ENCODE measurements at regions of chr6 and their contacts with region 1.

Region 1: DNA sequence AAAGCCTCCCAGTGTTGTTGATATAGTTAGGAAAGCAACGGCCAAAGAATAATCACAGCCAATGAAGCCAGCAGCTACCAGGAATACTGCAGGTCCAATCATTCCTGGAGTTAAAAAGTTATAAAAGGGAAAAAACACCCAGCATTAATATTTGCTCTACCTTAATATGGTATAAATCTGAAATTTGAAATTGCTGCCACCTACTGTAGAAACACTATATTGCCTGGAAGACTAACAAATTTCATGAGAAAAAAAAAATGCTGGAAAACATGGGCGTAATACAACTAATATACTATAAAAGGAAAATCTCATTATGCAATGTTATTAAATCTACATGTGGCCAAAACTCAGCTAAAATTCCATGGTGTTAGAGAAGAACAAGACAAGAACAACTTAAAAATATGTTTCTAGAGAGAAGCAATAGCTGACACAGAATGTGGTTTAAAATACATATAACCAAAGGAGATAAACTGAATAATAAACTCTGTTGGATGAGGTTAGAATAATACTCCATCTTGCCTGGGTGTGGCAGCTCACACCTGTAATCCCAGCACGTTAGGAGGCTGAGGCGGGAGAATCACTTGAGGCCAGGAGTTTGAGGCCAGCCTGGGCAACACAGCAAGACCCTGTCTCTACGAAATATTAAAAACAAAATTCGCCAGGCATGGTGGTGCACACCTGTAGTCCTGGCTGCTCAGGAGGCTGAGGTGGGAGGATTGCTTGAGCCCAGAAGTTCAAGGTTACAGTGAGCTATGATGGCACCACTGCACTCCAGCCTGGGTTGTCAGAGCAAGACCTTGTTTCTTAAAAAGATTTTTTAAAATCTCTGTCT is 43.1 kb downstream of the SLC17A5 start:
- DNase-seq: no peak
- ATAC-seq: peak; percentile 67
- H3K4me3 Mint-ChIP-seq: no peak overlapping the region
- H3K27ac Mint-ChIP-seq: no peak overlapping the region
- H3K4me1 Mint-ChIP-seq: peaks cover 5% of the 10 kb centered on the region
- H3K27me3 Mint-ChIP-seq: no peaks in the 10 kb centered on the region
- CTCF ChIP-seq: no peak

Region 2: DNA sequence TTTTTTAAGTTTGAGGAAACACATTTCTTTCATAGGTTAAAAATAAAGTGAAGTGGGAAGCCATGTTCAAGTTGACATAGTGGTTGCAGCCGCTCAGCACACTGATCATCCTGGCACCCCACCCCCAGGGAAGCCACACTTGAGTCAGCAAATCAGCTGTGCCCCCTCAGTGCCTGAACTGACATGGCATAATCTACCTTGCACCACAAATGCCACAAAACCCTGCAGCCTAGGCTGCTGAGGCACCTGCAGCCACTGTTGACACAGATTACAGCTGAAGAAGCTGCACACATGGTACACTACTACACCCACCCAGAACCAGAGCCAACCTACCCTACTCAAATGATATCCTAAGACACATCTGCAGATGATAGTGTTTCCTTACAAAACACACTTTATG is 1801.8 kb before region 1 on chr6:
- CTCF ChIA-PET with region 1: no interaction called
- POLR2A ChIA-PET with region 1: no interaction called
- intact Hi-C with region 1: no loop called
- DNase-seq: no peak
- ATAC-seq: no peak
- H3K4me3 Mint-ChIP-seq: no peak overlapping the region
- H3K27ac Mint-ChIP-seq: no peak overlapping the region
- H3K4me1 Mint-ChIP-seq: no peaks in the 10 kb centered on the region
- H3K27me3 Mint-ChIP-seq: no peaks in the 10 kb centered on the region
- CTCF ChIP-seq: no peak

Region 3: DNA sequence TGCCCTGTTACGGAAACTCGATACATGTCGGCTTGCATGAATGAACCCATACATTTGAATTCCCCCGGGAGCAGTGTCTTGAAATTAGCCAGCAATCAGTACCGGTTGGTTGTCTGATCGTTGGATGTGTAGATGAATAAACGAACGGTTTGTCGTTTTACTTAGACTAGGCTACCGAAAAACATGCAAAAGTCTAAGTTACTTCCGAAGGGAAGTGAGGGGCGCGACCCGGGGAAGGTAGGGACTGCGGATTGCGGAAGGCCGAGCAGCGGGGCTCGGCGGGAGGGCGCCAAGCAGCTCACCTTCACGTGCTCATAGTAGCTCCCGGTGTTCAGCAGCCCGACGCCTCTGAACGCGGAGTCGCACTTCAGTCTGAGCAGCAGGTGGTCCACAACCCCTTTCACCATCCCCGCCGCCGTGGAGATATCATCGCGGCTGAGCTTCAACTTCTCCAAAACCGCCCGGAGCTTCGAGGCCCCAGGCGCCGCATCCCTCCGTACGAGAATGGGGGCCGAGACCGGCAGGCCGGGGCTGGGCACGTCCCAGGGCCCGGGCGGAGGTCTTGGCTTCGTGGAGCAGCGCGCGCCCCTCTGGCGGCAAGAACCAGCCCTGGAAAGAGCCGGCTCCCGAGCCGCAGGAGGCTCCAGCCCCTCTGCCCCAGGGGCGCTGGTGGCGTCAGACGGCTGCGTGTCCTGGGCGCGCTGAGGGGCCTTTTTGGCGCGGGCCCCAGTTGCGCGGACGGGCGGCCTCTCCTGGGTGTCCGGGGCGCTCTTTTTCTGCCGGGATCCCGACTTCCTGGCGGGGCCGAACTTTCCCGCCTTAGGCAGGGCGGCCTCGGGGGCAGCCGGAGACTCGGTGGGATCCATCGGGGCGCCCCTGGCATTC is 159.2 kb before region 1 on chr6:
- CTCF ChIA-PET with region 1: interaction called, 4 read pairs
- POLR2A ChIA-PET with region 1: no interaction called
- intact Hi-C with region 1: loop called (anchors 2 kb)
- DNase-seq: peak; percentile 54
- ATAC-seq: peak; percentile 59
- H3K4me3 Mint-ChIP-seq: peak overlapping the region; percentile 93
- H3K27ac Mint-ChIP-seq: peak overlapping the region; percentile 91
- H3K4me1 Mint-ChIP-seq: peaks cover 22% of the 10 kb centered on the region
- H3K27me3 Mint-ChIP-seq: no peaks in the 10 kb centered on the region
- CTCF ChIP-seq: no peak

Region 4: GRCh38 chr6:73580247-73581149 is 30.2 kb before region 1 on chr6:
- CTCF ChIA-PET with region 1: interaction called, 14 read pairs
- POLR2A ChIA-PET with region 1: interaction called, 11 read pairs
- intact Hi-C with region 1: loop called (anchors 1 kb)
- DNase-seq: peak; percentile 54
- ATAC-seq: peak; percentile 74
- H3K4me3 Mint-ChIP-seq: peak overlapping the region; percentile 80
- H3K27ac Mint-ChIP-seq: peak overlapping the region; percentile 98
- H3K4me1 Mint-ChIP-seq: peaks cover 48% of the 10 kb centered on the region
- H3K27me3 Mint-ChIP-seq: no peaks in the 10 kb centered on the region
- CTCF ChIP-seq: no peak

Region 5: GRCh38 chr6:73585566-73586415 is 24.9 kb before region 1 on chr6:
- CTCF ChIA-PET with region 1: interaction called, 14 read pairs
- POLR2A ChIA-PET with region 1: interaction called, 11 read pairs
- intact Hi-C with region 1: loop called (anchors 1 kb)
- DNase-seq: no peak
- ATAC-seq: peak; percentile 76
- H3K4me3 Mint-ChIP-seq: peak overlapping the region; percentile 79
- H3K27ac Mint-ChIP-seq: peak overlapping the region; percentile 99
- H3K4me1 Mint-ChIP-seq: peaks cover 38% of the 10 kb centered on the region
- H3K27me3 Mint-ChIP-seq: no peaks in the 10 kb centered on the region
- CTCF ChIP-seq: no peak